Dendritic cell treated with granulocyte-macrophage colony-stimulating factor and Interleukin-4, amounts not matched to agents 40 ng/mL and 50 ng/mL, for 4 days (primary cell): ENCODE measurements at regions of chr9 and their contacts with region 1.

Region 1: DNA sequence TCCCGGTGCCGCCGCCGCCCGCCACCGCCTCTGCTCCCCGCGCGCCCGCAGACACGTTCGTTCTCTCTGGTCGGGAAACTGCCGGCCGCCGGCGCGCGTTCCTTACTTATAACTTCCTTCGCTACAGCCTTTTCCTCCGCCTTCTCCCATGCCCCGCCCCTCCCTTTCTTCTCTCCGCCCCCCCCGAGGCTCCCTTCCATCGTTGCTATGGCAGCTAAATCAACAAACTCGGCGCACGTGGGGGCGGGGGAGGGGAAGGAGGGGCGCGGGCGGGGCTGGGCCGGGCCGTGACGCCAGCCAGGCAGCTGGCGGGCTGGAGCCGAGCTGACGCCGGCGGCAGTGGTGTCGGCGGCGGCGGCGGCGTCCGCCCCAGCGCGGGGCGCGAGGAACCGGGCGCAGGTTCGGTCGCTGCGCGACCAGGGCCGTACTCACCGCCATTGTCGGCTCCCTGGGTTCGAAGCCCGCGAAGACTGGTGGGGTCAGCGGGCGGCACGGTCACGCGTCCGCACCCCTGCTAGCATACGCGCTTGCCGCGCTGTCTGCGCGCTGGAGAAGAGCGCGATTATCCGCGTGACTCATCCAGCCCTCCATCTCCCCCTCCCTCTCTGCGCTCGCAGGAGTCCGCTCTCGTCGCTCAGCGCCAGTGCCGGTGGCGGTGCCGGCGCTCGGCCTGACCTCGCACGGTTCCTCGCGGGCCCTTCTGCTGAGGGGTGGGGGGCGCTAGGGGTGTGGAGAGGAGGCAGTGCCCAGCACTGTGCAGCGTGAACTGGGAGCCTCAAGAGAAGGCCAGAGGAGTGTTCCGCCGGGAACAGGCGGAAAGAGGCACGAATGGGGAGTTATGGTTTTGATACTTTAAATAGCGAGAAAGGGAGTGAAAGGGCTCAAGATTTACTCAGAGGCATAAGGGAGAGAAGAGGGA is at the start of gene KLF4:
- H3K4me3 Mint-ChIP-seq: peak within 1 kb of the TSS; percentile 99
- H3K27ac Mint-ChIP-seq: peak within 1 kb of the TSS; percentile 99
- H3K4me1 Mint-ChIP-seq: peaks cover 51% of the 10 kb centered on the region
- H3K27me3 Mint-ChIP-seq: peaks cover 20% of the 10 kb centered on the region

Region 2: DNA sequence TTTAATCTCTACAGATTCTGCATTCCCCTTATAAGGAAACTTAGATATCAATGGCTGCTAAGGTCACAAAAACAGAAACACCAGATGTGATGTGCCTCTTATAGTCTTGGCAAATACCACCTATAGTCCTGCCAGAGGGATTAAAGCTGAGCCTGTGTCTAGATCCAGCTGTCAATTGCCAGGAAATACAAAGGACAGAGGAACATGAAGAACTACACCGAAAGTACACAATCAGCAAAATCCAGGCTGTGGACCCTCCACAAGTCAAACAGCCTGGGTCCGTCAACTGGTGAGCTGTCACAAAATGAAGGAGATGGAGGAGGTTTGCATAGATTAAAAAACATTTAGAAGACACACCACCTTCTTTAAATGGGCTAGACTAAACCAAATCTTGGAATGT is 85.8 kb before region 1 on chr9:
- intact Hi-C with region 1: no loop called
- H3K4me3 Mint-ChIP-seq: no peak overlapping the region
- H3K27ac Mint-ChIP-seq: no peak overlapping the region
- H3K4me1 Mint-ChIP-seq: no peaks in the 10 kb centered on the region
- H3K27me3 Mint-ChIP-seq: peaks cover 5% of the 10 kb centered on the region

Region 3: DNA sequence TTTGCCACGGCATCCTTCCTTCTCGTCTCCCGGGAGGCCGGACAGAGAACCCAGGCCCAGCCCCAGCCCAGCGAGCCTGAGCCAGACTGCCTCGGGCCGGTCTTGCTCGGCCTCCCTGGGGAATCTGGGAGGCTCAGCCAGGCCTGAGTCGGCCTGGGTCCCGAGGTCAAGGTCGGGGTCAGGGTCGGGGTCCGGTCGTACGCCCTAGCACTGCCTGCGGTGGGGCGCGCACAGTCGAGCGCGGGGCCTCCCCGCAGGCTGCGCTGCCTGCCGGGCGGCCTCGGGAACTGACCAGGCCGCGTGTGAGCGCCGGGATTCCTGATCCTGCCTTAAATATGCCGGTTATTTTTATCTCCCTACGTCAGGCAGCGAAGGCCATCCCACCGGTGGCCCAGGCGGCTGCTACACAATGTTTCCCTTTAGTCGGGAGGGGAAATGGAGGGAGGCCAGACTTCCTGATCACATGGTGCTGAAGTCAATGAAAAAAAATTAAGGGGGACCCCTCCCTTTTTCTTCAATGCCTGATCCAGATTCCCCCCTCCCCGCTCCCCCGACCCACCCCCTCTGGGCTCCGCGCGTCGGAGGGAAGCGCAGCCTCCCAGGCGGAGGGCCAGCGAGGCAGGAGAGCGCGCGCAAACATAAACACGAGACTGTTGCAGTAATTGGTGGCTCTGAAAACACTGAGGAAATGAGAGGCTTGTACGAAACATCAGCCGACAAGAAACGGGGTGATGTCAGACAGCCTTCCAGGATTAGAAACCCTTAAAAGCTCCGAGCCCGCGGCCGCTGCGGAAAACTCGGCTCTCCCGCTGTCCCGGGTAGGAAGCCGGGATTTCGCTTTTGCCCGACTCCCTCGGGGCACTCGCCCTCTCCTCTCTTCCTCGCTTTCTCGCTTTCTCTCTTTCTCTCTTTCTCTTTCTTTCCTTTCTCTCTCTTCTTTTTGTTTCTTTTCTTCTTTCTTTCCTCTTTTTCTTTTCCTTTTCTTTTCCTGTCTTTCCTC is 147.8 kb after region 1 on chr9:
- intact Hi-C with region 1: loop called (anchors 2 kb)
- H3K4me3 Mint-ChIP-seq: peak overlapping the region; percentile 86
- H3K27ac Mint-ChIP-seq: peak overlapping the region; percentile 99
- H3K4me1 Mint-ChIP-seq: peaks cover 53% of the 10 kb centered on the region
- H3K27me3 Mint-ChIP-seq: no peaks in the 10 kb centered on the region

Region 4: GRCh38 chr9:107674721-107675277 is 184.9 kb after region 1 on chr9:
- intact Hi-C with region 1: loop called (anchors 5 kb)
- H3K4me3 Mint-ChIP-seq: peak overlapping the region; percentile 48
- H3K27ac Mint-ChIP-seq: peak overlapping the region; percentile 96
- H3K4me1 Mint-ChIP-seq: peaks cover 47% of the 10 kb centered on the region
- H3K27me3 Mint-ChIP-seq: no peaks in the 10 kb centered on the region

Region 5: DNA sequence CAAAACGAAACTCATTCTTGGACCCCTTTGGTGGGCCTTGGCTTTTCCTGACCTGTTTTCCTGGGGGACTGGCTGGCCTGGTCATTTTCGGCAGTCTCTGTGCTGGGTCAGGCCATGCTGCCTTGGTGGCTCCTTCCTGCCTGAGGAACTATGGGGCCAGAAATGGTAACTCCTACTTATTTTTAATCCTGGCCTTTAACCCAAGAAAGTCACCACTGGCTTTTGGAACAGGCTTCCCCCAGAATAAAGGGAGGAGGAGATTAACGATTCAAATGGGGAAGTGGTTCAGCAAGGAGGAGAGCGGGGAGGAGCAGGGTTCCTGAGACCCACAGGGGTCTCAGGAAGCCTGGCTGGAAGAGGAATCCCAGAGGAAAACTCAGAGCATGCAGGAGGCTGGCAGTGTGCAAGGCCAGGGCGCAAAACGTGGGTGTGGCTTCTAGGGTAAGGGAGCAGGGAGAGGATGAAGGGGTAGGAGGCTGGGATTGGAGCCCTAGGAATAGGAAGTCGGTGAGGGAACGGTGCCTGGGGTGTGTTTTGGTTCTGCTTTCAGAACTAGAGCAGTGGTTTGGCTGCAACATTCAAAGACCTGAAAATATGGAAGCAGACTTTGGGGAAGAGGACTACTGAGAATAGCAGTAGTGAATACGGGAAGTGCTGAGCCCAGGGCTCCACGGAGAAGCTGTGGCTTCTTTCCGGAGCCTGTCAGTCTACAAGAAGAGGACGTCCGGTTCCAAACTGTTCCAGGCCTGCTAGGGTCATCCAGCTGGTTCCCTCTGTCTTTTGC is 270.7 kb after region 1 on chr9:
- intact Hi-C with region 1: loop called (anchors 2 kb)
- H3K4me3 Mint-ChIP-seq: peak overlapping the region; percentile 30
- H3K27ac Mint-ChIP-seq: peak overlapping the region; percentile 90
- H3K4me1 Mint-ChIP-seq: peaks cover 59% of the 10 kb centered on the region
- H3K27me3 Mint-ChIP-seq: no peaks in the 10 kb centered on the region

Region 6: DNA sequence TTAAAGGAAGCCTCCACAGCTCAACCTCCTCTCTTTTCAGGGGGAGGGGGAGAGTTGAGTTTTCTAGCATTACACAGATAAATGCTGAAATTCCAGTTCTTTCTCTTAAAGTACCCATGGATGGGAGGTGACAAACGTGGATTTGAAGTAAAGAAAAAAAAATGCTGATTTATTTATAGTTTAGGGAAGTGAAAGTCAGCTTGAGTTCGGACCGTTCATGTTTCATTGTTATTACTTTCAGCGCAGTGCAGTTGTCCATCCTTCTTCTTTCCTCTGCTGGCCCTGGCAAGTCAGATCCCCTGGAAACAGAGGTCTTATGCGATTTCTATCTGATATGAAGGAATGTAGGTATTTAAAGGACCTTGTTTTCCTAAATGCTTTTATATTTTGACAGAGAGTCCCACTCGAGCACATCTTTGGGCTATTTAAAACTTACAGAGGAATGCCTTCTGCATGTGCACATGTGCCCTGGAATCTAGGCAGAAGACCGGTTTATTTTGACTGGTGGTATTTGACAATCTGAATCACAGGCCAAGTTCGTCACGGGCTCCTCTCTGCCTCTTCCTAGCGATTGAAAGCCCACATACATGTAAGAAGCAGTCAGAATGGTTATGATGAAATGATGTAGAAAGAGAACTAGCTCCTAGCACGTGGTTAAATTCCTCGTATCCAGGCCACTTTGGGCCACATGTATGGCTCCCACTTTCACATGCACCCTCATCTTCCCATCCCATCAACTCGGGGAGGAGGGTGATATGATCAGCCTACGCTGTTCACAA is 384.8 kb after region 1 on chr9:
- intact Hi-C with region 1: loop called (anchors 10 kb)
- H3K4me3 Mint-ChIP-seq: no peak overlapping the region
- H3K27ac Mint-ChIP-seq: peak overlapping the region; percentile 88
- H3K4me1 Mint-ChIP-seq: peaks cover 89% of the 10 kb centered on the region
- H3K27me3 Mint-ChIP-seq: peaks cover 1% of the 10 kb centered on the region